ENCODE measurements at regions of chr17 and their contacts with region 1.

Region 1: DNA sequence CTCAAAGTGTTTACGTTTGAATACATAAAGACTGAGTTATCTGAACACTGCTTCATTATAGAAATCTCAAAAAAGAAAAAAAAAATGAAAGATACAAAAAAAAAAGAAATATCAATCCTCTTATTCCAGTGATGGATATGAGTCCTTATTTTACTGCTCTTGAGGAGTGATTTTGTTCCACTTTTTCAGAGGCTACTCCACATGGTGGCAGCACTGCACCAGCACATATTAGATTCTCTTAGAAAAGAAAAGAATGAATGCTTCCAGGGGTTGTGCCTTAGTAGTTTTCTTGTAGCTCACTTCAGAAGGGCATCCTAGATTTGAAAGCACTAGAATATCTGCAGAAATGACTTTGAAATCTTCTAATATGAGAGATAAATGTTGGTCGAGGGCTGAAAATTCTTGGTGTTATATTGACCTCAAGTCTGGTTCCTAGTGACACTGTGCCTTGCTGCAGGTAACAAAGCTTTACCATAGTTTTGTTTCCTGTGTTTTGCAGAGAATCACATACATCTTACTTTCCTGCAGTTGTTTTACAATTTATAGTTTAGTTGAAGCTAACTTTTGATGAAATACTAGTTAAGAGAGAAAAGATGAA is 25.9 kb downstream of the AP2B1 start:
- DNase-seq: no peak
- ATAC-seq: no peak
- H3K4me3 Mint-ChIP-seq: no peak overlapping the region
- H3K27ac Mint-ChIP-seq: no peak overlapping the region
- H3K4me1 Mint-ChIP-seq: peaks cover 6% of the 10 kb centered on the region
- H3K27me3 Mint-ChIP-seq: no peaks in the 10 kb centered on the region
- CTCF ChIP-seq: no peak

Region 2: DNA sequence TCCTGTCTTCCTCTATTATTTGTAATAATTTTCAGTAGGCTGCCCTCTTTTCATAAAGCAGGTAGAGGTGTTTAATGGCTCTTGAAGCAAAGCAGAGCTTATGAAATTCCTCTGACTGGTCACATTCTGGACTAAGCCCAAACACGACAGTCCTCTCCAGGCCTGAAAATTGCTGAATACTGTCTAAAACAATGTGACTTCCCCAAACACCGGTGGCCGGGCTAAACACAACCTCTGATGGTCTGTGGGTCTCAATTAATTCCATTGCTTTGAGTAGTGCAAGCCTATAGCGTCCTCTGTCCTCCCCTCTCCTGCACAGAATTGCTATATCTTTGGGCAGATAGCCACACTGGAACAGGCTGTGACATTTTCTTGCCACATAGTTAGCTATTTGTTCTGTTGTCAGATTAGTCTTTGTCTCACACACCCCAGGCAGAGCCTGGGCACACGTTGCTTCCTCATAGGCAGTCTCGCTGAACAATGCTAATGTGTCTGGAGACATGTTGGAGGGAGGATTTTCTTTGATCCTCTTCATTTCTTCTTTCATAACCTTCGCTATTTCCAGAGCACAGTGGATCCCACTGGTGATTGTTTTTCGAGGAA is 64.7 kb before region 1 on chr17:
- CTCF ChIA-PET with region 1: no interaction called
- POLR2A ChIA-PET with region 1: no interaction called
- intact Hi-C with region 1: no loop called
- DNase-seq: no peak
- ATAC-seq: no peak
- H3K4me3 Mint-ChIP-seq: no peak overlapping the region
- H3K27ac Mint-ChIP-seq: no peak overlapping the region
- H3K4me1 Mint-ChIP-seq: peaks cover 15% of the 10 kb centered on the region
- H3K27me3 Mint-ChIP-seq: peaks cover 4% of the 10 kb centered on the region
- CTCF ChIP-seq: no peak

Region 3: DNA sequence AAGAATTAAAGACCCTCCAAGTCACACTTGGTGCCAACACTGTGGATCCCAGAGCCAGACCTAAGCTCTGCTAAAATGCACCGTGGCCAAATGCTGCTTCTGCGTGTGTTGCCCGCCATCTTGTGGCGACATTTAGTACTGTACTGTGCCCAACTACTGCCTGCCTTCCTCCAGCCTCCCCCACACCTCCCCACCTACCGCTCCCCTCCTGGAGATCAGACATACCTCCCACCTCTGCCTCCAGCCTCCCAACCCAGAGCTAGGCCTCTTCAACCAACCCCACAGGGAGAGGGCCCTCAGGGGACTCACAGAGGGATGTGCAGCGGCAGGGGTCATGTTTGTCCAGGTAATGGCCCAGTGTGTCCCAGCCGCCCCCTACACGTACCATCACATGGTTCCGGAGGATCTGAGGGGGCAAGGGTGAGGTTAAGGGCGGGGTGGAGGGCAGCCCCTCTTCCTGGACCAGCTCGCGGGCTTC is 134.6 kb after region 1 on chr17:
- CTCF ChIA-PET with region 1: interaction called, 51 read pairs
- POLR2A ChIA-PET with region 1: no interaction called
- intact Hi-C with region 1: loop called (anchors 1 kb)
- DNase-seq: peak; percentile 64
- ATAC-seq: peak; percentile 97
- H3K4me3 Mint-ChIP-seq: no peak overlapping the region
- H3K27ac Mint-ChIP-seq: no peak overlapping the region
- H3K4me1 Mint-ChIP-seq: peaks cover 6% of the 10 kb centered on the region
- H3K27me3 Mint-ChIP-seq: peaks cover 35% of the 10 kb centered on the region
- CTCF ChIP-seq: no peak

Region 4: DNA sequence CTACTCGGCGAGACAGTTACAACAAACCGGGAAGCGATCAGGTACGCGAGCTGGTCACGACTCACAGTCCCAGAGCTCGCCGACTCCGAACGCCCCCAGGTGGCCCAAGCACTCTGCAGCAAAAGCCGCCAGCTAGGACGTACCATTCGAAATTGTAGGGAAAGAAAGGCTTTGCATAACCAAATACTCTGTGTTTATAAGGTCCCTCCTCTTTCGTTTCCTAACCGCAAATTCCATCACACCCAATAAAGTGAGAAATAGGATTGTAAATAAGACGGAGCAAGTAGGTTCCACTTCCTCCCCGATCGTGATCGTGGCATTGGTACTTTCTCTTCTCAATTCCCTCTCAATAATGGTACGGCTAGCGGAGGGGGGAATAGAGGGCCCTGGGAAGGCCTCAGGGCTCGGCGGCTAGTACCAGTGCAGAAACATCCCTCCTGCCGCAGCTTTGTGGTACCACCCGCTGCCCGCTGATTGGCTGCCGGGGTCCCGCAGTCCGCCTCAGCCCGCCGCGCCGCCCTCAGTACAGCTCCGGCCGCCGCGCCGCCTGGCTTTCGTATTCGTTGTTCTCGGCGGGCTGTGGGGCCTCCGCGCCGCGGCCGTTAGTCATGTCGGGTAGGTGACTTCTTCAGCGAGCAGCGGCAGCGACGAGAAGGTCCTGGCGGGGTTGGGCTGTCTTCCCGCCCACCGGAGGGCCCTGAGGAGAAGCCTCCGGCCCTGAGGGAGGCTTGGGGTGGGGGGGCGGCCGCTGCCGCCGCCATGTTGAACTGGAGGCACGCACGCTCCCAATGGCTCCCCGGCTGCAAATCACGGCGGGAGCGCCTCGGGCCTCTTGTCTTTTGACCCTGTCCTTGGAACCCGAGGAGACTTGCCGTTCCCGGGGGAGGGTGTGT is 196.2 kb after region 1 on chr17 and contains the start of gene TAF15:
- CTCF ChIA-PET with region 1: interaction called, 5 read pairs
- POLR2A ChIA-PET with region 1: interaction called, 6 read pairs
- intact Hi-C with region 1: loop called (anchors 10 kb)
- DNase-seq: peak; percentile 91
- ATAC-seq: peak; percentile 88
- H3K4me3 Mint-ChIP-seq: peak within 1 kb of the TSS; percentile 93
- H3K27ac Mint-ChIP-seq: peak within 1 kb of the TSS; percentile 100
- H3K4me1 Mint-ChIP-seq: peaks cover 55% of the 10 kb centered on the region
- H3K27me3 Mint-ChIP-seq: no peaks in the 10 kb centered on the region
- CTCF ChIP-seq: no peak
- total RNA-seq, gene TAF15: 224 and 243 TPM in 2 replicates